Panc1 (cell line): ENCODE measurements at regions of chr2 and their contacts with region 1.

Region 1: DNA sequence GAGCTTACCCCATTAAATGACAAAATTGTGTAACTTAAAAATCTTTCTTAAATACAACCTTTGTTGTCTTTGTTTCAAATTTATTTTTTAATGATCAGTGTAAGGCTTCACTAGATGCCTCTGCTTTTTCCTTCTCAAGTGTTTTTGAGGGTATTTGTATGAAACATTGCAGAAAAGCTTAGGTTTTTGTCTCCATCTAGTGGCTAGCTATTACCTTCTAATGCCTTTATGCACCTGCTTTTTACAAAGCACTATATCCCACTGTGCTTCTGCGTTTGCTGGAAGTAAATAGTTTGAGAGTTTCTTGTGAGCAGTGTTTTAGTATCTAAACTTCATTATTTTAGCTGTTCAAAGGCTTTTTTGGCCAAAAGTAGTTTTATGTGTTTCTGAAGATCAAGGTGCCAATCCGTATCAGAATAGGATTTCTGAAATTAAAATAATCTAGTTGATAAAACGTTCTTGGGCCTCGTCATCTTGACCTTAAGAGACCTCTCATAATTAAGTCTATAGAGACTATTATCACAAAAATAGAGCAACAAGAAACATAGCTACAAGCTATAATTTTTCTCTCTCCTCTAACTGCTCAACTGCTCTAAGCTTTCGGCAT is 47.0 kb downstream of the IWS1 start:
- DNase-seq: peak; percentile 30
- ATAC-seq: peak; percentile 79
- H3K4me3 ChIP-seq: no peak overlapping the region
- H3K27ac ChIP-seq: no peak overlapping the region
- H3K4me1 ChIP-seq: no peaks in the 10 kb centered on the region
- H3K27me3 ChIP-seq: no peaks in the 10 kb centered on the region
- CTCF ChIP-seq: peak; percentile 70; the same call in 1 of the 2 replicates

Region 2: DNA sequence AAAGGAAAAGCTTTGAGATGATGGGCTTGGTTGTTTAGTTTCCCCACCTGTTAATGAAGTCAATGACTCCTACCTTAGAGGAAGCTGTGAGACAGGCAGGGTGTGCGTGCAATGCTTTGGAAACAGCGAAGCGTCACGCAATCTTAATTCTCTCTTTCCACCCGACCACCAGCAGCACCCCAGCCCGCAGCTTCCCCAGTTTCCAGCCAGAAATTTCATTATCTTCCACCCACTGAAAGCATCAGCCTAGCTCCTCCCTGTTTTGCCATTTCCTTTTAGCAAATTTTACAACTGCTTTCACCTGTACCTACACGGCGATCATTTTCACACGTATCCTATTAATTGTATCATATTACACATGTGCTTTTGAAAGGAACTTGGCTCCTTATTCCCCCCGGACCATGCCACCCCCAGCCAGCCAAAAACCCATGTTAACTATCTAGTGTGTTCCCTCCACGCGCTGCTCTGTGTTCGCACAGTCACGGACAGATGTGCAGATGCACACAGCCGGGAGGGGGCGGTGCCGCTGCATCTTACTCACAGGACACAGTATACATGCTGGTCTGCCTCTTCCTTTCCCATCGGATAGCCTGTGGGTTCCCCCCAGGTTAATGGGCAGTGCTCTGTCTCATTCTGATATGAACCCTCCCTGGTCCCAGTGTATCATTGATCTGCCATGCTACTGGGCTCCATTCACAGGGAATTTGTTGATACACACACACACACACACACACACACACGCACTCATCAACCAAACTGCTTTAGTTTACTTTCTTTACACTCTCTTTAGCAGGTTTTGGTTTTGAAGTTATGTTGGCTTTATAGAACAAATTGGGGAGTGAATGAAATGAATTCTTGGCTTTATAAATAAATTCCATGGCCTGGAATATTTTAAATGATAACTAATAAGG is 281.6 kb before region 1 on chr2:
- CTCF ChIA-PET with region 1: interaction called, 4 read pairs
- POLR2A ChIA-PET with region 1: no interaction called
- in situ Hi-C with region 1: no loop called
- intact Hi-C with region 1: loop called (anchors 1 kb)
- DNase-seq: no peak
- ATAC-seq: peak; percentile 99
- H3K4me3 ChIP-seq: peak overlapping the region; percentile 7 to 40; a peak in 3 of 4 replicates
- H3K27ac ChIP-seq: no peak overlapping the region
- H3K4me1 ChIP-seq: 0 out of 2 replicates have a peak, but pooled peaks cover 3% of the 10 kb centered on the region
- H3K27me3 ChIP-seq: no peaks in the 10 kb centered on the region
- CTCF ChIP-seq: peak; percentile 85

Region 3: GRCh38 chr2:127324635-127325034 is 154.7 kb before region 1 on chr2:
- CTCF ChIA-PET with region 1: interaction called, 4 read pairs
- POLR2A ChIA-PET with region 1: interaction called, 3 read pairs
- in situ Hi-C with region 1: no loop called
- intact Hi-C with region 1: loop called (anchors 5 kb)
- DNase-seq: peak; percentile 10
- ATAC-seq: peak; percentile 78
- H3K4me3 ChIP-seq: no peak overlapping the region
- H3K27ac ChIP-seq: no peak overlapping the region
- H3K4me1 ChIP-seq: no peaks in the 10 kb centered on the region
- H3K27me3 ChIP-seq: no peaks in the 10 kb centered on the region
- CTCF ChIP-seq: peak; percentile 73; the same call in 1 of the 2 replicates

Region 4: DNA sequence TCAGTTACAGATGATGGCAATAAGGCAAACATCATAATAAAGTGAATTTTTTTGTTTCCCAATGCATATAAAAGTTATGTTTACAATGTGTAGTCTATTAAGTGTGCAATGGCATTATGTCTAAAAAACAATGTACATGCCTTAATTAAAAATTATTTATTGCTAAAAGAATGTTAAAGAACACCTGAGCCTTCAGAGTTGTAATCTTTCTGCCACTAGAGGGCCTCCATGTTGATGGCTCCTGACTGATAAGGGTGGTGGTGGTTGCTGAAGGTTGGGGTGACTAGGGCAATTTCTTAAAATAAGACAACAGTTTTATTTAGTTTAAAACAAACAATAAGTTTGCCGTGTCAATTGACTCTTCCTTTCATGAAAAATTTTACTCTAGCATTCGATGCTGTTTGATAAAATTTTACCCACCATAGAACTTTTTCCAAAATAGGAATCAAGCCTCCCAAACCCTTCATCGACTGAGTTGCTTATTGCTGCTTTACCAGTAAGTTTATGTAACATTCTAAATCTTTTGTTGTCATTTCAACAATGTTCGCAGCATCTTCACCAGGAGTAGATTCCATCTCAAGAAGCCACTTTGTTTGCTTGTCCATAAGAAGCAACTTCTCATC is 123.8 kb before region 1 on chr2:
- CTCF ChIA-PET with region 1: no interaction called
- POLR2A ChIA-PET with region 1: no interaction called
- in situ Hi-C with region 1: no loop called
- intact Hi-C with region 1: no loop called
- DNase-seq: no peak
- ATAC-seq: peak; percentile 65; the same call in 1 of the 2 replicates
- H3K4me3 ChIP-seq: no peak overlapping the region
- H3K27ac ChIP-seq: no peak overlapping the region
- H3K4me1 ChIP-seq: peaks cover 10% of the 10 kb centered on the region; the same call in 1 of the 2 replicates
- H3K27me3 ChIP-seq: no peaks in the 10 kb centered on the region
- CTCF ChIP-seq: peak; percentile 75

Region 5: DNA sequence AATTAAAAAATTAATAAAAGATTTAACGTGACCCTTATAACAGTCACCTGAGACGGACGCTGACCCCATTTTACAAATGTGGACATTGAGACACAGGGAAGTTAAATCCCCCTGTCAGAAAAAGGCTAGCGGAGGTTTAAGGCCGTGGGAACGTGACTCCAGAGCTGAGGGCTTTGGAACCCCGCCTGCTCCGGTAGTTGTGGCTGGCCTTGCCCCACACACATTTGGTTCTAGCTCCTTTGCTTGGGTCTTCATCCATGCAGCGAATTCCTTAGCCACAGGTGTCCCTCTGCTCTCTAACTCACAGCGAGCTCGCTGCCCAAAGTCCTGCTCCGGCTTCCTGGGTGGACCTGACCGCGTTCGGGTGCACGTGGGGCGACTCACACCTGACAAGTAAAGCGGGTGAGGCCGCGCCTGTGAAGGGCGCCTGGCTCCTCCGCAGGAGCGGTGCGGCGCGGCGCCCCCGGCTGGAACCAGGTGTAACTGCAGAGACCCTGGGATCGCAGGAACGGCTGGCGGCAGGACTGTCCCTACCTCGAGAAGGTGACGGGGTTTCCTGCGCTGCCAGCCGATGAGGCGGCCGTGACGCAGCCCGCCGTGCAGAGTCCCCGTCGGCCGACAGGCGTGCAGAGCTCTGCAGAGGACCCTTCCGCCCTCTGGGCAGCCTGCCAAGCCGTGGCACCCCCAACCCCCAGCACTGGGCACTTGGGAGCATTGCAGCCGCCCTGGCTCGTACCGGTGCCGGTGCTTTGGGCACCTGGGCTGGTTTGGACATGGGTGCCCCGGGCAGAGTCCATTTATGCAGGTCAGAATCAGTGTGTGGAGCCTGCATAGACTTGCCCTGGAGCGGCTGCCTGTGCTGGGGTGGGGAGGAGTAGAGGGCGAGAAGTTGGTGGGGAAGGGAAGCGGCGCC is 63.5 kb before region 1 on chr2:
- CTCF ChIA-PET with region 1: interaction called, 3 read pairs
- POLR2A ChIA-PET with region 1: no interaction called
- in situ Hi-C with region 1: loop called (anchors 10 kb)
- intact Hi-C with region 1: no loop called
- DNase-seq: no peak
- ATAC-seq: peak; percentile 83
- H3K4me3 ChIP-seq: peak overlapping the region; percentile 35 to 51
- H3K27ac ChIP-seq: peak overlapping the region; percentile 74
- H3K4me1 ChIP-seq: peaks cover 61% of the 10 kb centered on the region
- H3K27me3 ChIP-seq: no peaks in the 10 kb centered on the region
- CTCF ChIP-seq: peak; percentile 94